Calu3 (cell line): ENCODE measurements at regions of chr3 and their contacts with region 1.

Region 1: DNA sequence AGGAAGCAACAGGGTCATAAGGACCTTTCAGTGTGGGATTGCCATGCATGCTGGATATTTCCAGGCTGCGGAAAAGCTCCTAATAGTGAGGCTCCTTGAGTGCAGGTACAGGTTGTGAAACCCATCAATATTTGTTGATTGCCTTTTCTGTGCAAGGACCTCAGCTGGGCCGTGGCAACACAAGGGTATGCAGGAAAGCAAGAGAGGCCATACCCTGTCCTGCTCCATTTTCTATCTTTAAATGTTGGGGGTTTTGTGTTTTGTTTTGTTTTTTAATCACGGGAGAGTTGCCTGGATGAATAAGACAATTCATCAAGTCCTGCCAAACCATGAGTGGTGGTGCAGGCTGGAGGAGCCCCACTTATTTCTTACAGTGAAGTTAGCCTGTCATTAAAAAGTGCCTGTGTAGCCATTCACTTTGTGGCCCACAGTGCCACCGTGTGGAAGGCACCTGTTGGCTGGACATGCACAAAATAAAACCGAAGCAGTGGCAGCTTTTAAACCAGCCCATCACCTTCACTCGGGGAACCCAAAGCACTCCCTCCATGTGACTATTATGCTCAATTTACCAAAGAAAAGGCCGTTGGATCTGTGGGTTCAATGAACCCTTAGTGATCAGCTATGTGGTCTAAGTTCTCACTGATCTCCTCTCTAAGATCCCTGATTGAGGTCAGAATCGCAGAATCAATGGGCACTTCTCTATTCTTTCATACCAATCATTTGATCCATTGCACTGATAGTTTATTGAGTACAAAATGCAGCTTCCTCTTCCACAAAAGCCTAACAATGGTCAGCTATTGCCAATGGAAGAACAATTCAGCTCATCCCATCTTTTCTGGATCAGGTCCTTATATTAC is 42.2 kb downstream of the CLDN18 start:
- DNase-seq: peak; percentile 75
- H3K4me3 Mint-ChIP-seq: no peak overlapping the region
- H3K27ac Mint-ChIP-seq: no peak overlapping the region
- H3K4me1 Mint-ChIP-seq: no peaks in the 10 kb centered on the region
- H3K27me3 Mint-ChIP-seq: no peaks in the 10 kb centered on the region
- CTCF ChIP-seq: peak; percentile 80

Region 2: DNA sequence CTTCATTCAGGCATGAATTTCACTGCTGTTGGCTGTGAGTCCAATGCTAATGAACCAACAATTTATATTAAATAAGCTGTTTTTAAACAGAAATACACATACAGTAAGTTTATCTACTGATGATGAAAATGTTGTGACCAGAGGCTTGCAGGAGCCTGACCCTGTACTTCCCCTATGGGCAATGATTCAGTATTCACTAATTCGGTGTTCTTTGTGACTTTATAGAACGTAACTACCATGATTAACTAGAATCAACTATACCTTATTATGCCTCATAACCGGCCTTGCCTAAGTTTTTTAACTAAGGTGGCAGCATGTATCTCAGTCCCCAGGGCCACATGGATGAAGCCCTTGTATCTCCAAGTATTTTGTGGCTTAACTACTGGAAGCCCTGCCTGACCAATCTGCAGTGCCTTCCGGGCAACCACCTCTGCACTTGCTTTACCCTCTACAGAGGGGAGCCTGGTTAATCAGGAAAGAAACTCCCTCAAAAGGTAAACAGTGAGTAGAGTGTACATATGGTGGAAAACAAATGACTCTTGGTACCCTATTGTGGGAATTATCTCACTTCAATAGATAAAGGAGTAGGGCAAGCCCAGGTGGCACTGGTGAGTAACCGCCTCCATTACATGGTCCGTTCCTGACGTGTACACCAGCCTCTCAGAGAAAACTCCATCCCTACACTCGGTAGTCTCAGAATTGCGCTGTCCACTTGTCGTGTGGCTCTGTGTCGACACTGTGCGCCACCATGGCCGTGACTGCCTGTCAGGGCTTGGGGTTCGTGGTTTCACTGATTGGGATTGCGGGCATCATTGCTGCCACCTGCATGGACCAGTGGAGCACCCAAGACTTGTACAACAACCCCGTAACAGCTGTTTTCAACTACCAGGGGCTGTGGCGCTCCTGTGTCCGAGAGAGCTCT is 53.8 kb before region 1 on chr3:
- CTCF ChIA-PET with region 1: no interaction called
- intact Hi-C with region 1: loop called (anchors 2 kb)
- DNase-seq: no peak
- H3K4me3 Mint-ChIP-seq: peak overlapping the region; percentile 35
- H3K27ac Mint-ChIP-seq: no peak overlapping the region
- H3K4me1 Mint-ChIP-seq: peaks cover 7% of the 10 kb centered on the region
- H3K27me3 Mint-ChIP-seq: peaks cover 26% of the 10 kb centered on the region
- CTCF ChIP-seq: no peak